Activated CD4-positive, alpha-beta memory T cell treated with anti-CD3 and anti-CD28 coated beads, Interleukin-2, amount 10 ng/mL, durations not matched to agents 7 days and 5 days (primary cell): ENCODE measurements at regions of chr2 and their contacts with region 1.

Region 1: DNA sequence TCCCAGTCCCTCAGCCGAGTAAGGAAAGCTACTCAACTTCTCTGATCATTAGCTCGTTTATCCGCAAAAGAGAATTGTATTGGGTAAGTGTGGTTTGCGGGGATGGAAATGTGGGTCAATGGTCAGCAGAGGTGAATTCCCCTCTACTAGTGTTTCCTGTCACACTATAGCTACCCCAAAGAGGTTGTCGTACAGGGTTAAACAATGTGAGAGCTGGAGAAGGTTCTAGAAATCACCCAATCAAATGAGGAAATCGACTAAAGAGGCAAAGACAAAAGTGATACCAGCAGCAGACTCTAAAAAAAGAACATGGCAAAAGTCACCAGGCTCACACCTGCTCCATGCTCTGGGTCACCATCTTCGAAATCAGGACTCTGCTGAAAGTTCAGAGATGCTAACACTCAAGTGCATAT is 144.7 kb upstream of the ITGA4 start:
- DNase-seq: peak; percentile 66
- H3K4me3 Mint-ChIP-seq: peak overlapping the region; percentile 67
- H3K27ac Mint-ChIP-seq: peak overlapping the region; percentile 90
- H3K4me1 Mint-ChIP-seq: peaks cover 50% of the 10 kb centered on the region
- H3K27me3 Mint-ChIP-seq: no peaks in the 10 kb centered on the region

Region 2: GRCh38 chr2:181140414-181140813 is 172.1 kb before region 1 on chr2:
- CTCF ChIA-PET with region 1: interaction called, 3 read pairs
- POLR2A ChIA-PET with region 1: interaction called, 17 read pairs
- DNase-seq: no peak
- H3K4me3 Mint-ChIP-seq: peak overlapping the region; percentile 65
- H3K27ac Mint-ChIP-seq: peak overlapping the region; percentile 79
- H3K4me1 Mint-ChIP-seq: peaks cover 76% of the 10 kb centered on the region
- H3K27me3 Mint-ChIP-seq: no peaks in the 10 kb centered on the region

Region 3: DNA sequence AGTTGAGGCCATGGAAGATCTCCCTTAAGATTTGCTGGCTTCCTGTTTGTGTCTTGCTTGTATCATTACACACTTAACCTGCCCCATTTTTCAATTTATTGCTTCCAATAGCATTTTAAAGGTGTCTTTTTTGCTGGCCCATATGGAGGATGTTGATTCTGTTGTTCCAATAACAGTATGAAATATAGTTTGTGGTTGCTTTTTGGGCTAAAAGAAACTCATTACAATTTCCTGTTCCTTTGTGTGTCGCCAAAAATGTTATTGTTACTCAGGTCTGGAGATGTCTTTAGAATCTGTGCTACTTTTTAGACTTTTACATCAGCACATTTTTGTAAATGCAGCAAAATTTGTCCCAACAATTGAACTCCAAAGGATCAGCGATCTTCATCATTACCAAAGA is 89.3 kb before region 1 on chr2:
- CTCF ChIA-PET with region 1: no interaction called
- POLR2A ChIA-PET with region 1: interaction called, 17 read pairs
- DNase-seq: no peak
- H3K4me3 Mint-ChIP-seq: peak overlapping the region; percentile 62
- H3K27ac Mint-ChIP-seq: peak overlapping the region; percentile 97
- H3K4me1 Mint-ChIP-seq: peaks cover 51% of the 10 kb centered on the region
- H3K27me3 Mint-ChIP-seq: no peaks in the 10 kb centered on the region

Region 4: DNA sequence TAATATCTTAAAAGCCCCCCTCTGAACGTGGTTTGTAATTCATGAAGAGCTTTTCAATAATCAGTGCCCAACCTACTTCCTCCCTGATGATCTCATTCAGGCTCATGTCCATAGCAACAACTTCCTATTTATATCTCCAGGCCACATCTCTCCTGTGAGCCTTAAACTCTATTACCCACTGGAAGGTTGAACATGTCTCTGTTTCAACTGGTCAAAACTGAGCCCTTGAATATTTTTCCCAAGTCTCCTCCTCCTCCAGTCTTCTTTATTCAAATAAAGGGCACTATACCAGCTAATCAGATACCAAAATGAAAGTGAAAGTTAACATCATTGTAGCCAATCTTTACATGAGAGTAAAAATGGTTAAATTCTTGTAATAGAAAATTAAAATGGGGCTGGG is 81.0 kb after region 1 on chr2:
- CTCF ChIA-PET with region 1: interaction called, 3 read pairs
- POLR2A ChIA-PET with region 1: interaction called, 12 read pairs
- DNase-seq: no peak
- H3K4me3 Mint-ChIP-seq: peak overlapping the region; percentile 45
- H3K27ac Mint-ChIP-seq: peak overlapping the region; percentile 48
- H3K4me1 Mint-ChIP-seq: peaks cover 26% of the 10 kb centered on the region
- H3K27me3 Mint-ChIP-seq: no peaks in the 10 kb centered on the region